ENCODE measurements at regions of chr19 and their contacts with region 1.

Region 1: GRCh38 chr19:19488875-19489690 is 26.3 kb downstream of the TSSK6 start:
- DNase-seq: peak; percentile 89
- ATAC-seq: peak; percentile 70
- H3K4me3 ChIP-seq: peak overlapping the region in 1 of 2 experiments; percentile 5; a peak in 1 of 4 replicates
- H3K27ac ChIP-seq: peak overlapping the region; percentile 72
- H3K4me1 ChIP-seq: peaks cover 19 to 43% of the 10 kb centered on the region in 2 experiments
- H3K27me3 ChIP-seq: no peaks in the 10 kb centered on the region
- CTCF ChIP-seq: no peak
- POLR2A ChIP-seq: no peak
- RAD21 ChIP-seq: no peak

Region 2: DNA sequence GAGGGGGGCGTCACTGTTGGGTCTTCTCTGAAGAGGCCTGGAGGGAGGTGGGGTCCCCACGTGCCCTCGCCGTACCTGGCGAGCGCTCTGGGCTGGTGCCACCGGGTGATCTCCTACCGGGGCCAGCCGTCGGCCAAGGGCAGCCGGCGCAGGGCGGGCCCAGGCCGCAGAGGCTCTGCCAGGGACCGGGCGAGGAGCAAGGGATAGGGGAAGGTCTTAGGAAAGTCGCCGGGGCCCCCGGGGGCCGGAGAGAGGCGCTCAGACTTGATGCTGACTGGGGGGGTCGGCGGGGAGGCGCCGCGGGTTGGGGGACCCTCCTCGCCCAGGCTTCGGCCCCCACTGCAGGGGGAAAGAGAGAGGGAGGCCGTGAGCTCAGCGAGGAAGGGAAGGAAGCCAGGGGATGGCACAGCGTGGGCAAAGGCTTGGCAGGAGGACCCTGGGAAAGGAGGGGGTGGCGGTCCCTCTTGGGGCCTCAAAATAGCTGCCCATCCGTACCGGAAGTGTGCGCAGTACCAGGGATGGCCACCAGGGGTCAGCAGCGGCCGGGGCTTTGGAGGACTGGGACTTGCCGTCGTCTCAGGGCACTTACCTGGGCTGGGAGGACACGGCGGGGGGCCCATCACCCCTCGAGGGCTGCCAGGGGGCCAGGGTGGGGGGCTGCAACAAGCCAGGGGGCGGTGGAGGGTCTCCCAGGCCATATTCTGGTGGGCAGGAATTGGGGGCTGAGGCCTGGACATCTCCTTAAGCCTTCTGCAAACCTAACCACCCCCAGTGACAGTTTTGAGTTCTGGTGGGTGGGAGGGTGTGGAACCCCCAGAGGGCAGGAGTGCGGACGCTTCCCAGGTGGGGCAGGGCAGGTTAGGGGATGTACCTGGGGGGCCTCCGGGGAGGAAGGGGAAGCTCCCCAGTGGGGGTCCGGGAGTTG is 343.1 kb before region 1 on chr19:
- CTCF ChIA-PET with region 1: interaction called, 4 read pairs
- POLR2A ChIA-PET with region 1: no interaction called
- RAD21 ChIA-PET with region 1: no interaction called
- intact Hi-C with region 1: loop called (anchors 5 kb)
- DNase-seq: no peak
- ATAC-seq: peak; percentile 92
- H3K4me3 ChIP-seq: no peak overlapping the region
- H3K27ac ChIP-seq: no peak overlapping the region
- H3K4me1 ChIP-seq: no peaks in the 10 kb centered on the region
- H3K27me3 ChIP-seq: no peaks in the 10 kb centered on the region
- CTCF ChIP-seq: peak; percentile 79 to 96 (median 86)
- POLR2A ChIP-seq: no peak
- RAD21 ChIP-seq: peak; percentile 91

Region 3: DNA sequence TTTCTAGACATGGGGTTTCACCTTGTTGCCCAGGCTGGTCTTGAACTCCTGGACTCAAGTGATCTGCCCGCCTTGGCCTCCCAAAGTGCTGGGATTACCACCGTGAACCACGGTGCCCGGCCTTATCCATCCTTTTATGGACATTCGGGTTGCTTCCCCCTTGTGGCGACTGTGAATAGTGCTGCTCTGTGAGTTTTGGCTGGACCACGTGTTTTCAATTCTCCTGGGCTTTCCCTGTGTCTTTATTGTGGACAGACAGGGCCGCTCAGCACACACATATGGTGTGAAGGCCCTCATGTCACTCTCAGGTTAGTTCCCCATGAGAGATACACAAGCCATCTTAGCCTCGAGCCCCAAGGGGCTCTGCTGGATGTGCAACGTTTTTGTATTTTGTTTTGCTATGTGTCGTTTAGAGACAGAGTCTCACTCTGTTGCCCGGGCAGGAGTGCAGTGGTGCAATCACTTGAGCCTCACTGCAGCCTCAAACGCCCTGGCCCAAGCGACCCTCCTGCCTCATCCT is 127.9 kb before region 1 on chr19:
- CTCF ChIA-PET with region 1: interaction called, 40 read pairs
- POLR2A ChIA-PET with region 1: interaction called, 10 read pairs
- RAD21 ChIA-PET with region 1: interaction called in 1 of 2 experiments, 5 read pairs
- intact Hi-C with region 1: no loop called
- DNase-seq: peak; percentile 85
- ATAC-seq: peak; percentile 87
- H3K4me3 ChIP-seq: no peak overlapping the region
- H3K27ac ChIP-seq: peak overlapping the region; percentile 3; the same call in 1 of the 2 replicates
- H3K4me1 ChIP-seq: peaks cover 12 to 30% of the 10 kb centered on the region in 2 experiments
- H3K27me3 ChIP-seq: no peaks in the 10 kb centered on the region
- CTCF ChIP-seq: peak; percentile 64 to 75 (median 71); a peak in 5 of 6 replicates
- POLR2A ChIP-seq: no peak
- RAD21 ChIP-seq: peak; percentile 54

Region 4: GRCh38 chr19:19366612-19367396 is 122.3 kb before region 1 on chr19:
- CTCF ChIA-PET with region 1: interaction called, 40 read pairs
- POLR2A ChIA-PET with region 1: interaction called, 10 read pairs
- RAD21 ChIA-PET with region 1: interaction called, 3 to 5 read pairs
- intact Hi-C with region 1: loop called (anchors 1 kb)
- DNase-seq: peak; percentile 95
- ATAC-seq: peak; percentile 88
- H3K4me3 ChIP-seq: peak overlapping the region; percentile 22 to 53
- H3K27ac ChIP-seq: peak overlapping the region; percentile 81
- H3K4me1 ChIP-seq: peaks cover 28 to 47% of the 10 kb centered on the region in 2 experiments
- H3K27me3 ChIP-seq: no peaks in the 10 kb centered on the region
- CTCF ChIP-seq: peak; percentile 94 to 99 (median 99)
- POLR2A ChIP-seq: no peak
- RAD21 ChIP-seq: peak; percentile 99